HEK293 (cell line): ENCODE measurements at regions of chr12 and their contacts with region 1.

Region 1: DNA sequence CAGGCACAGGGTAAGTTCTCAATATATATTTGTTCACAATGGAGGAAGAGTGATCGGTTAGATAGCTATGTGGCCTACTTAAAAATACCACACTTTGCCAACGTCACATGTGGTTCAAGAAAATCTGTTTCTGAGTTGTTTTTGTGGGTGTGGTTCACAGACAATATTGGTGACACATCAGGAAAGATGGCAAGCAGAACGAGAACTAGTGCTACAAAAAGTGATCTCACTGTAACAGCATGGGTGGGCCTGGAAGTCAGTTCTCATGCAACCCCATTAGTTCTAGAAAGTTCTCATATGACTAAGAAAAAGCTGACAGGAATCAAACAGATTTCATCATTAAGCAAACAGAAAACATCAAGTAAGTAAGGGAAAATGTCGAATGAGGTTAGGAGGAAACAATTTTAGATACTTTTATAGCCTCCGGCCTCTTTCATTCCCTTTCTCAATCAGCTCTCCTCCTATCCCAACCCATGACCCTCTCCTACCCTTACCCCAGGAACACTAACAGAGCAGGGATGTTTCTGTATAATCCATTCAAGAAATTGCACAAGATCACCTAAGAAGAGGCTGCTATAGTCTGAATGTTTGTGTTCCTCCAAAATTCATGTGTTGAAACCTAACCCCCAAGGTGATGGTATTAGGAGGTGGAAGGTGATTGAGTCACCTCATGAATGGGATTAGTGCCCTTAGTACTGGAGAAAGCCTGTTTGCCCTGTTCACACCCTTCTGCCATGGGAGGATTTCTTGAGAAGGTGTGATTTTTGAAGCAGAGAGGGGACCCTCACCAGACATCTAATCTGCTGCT is 15.5 kb upstream of the NTN4 start:
- H3K4me3 ChIP-seq: no peak overlapping the region
- H3K27ac ChIP-seq: no peak overlapping the region
- H3K4me1 ChIP-seq: peaks cover 2% of the 10 kb centered on the region; the same call in 1 of the 2 replicates
- CTCF ChIP-seq: no peak

Region 2: GRCh38 chr12:95774311-95775045 is 31.6 kb before region 1 on chr12:
- CTCF ChIA-PET with region 1: no interaction called
- POLR2A ChIA-PET with region 1: no interaction called
- H3K4me3 ChIP-seq: no peak overlapping the region
- H3K27ac ChIP-seq: no peak overlapping the region
- H3K4me1 ChIP-seq: no peaks in the 10 kb centered on the region
- CTCF ChIP-seq: no peak

Region 3: GRCh38 chr12:95820102-95820703 is 14.1 kb after region 1 on chr12:
- CTCF ChIA-PET with region 1: interaction called, 11 read pairs
- POLR2A ChIA-PET with region 1: no interaction called
- H3K4me3 ChIP-seq: no peak overlapping the region
- H3K27ac ChIP-seq: no peak overlapping the region
- H3K4me1 ChIP-seq: no peaks in the 10 kb centered on the region
- CTCF ChIP-seq: peak; percentile 20; the same call in 1 of the 2 replicates